Activated CD8-positive, alpha-beta T cell treated with anti-CD3 and anti-CD28 coated beads, Interleukin-2, amount 10 ng/mL, durations not matched to agents 7 days and 5 days (primary cell): ENCODE measurements at regions of chr10 and their contacts with region 1.

Region 1: DNA sequence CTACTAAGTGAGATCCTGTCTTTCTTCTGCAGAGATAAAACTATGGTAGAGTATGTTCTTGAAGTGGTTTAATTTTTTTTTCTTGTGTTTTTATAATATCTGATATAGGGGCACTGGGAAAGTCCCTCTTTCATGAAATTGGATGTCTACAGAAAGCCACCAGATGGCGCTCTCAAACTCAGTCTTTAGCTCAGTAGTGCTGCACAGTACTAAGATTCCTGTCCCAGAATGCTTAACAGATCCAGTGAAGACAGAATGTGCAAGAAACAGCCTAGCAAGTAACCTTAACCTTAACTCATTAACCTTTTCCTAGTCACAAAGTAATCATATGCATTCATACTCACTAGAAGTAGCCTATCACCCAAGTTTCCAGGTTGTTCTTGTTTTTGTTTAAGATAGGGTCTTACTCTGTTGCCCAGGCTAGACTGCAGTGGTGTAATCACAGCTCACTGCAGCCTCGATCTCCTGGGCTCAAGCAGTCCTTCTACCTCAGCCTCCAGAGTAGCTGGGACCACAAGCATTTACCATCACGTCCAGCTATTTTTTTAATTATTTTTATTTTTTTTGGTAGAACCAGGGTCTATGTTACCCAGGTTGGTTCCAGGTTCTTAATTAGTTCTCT is 56.7 kb downstream of the IDE start:
- DNase-seq: peak; percentile 82
- ATAC-seq: peak; percentile 97
- H3K4me3 Mint-ChIP-seq: no peak overlapping the region
- H3K27ac Mint-ChIP-seq: no peak overlapping the region
- H3K4me1 Mint-ChIP-seq: peaks cover 6% of the 10 kb centered on the region
- H3K27me3 Mint-ChIP-seq: no peaks in the 10 kb centered on the region

Region 2: GRCh38 chr10:92527716-92528115 is 10.6 kb after region 1 on chr10:
- CTCF ChIA-PET with region 1: interaction called, 17 read pairs
- POLR2A ChIA-PET with region 1: interaction called, 3 read pairs
- DNase-seq: no peak
- ATAC-seq: no peak
- H3K4me3 Mint-ChIP-seq: no peak overlapping the region
- H3K27ac Mint-ChIP-seq: no peak overlapping the region
- H3K4me1 Mint-ChIP-seq: no peaks in the 10 kb centered on the region
- H3K27me3 Mint-ChIP-seq: no peaks in the 10 kb centered on the region

Region 3: GRCh38 chr10:92573798-92574547 is 56.8 kb after region 1 on chr10 and contains the start of gene IDE:
- CTCF ChIA-PET with region 1: interaction called, 109 read pairs
- POLR2A ChIA-PET with region 1: no interaction called
- DNase-seq: peak; percentile 87
- ATAC-seq: peak; percentile 82
- H3K4me3 Mint-ChIP-seq: peak within 1 kb of the TSS; percentile 80
- H3K27ac Mint-ChIP-seq: peak within 1 kb of the TSS; percentile 84
- H3K4me1 Mint-ChIP-seq: peaks cover 23% of the 10 kb centered on the region
- H3K27me3 Mint-ChIP-seq: peaks cover 2% of the 10 kb centered on the region
- total RNA-seq, gene IDE: 12.5 to 13.4 TPM

Region 4: GRCh38 chr10:92867235-92867634 is 350.1 kb after region 1 on chr10:
- CTCF ChIA-PET with region 1: no interaction called
- POLR2A ChIA-PET with region 1: no interaction called
- DNase-seq: no peak
- ATAC-seq: no peak
- H3K4me3 Mint-ChIP-seq: no peak overlapping the region
- H3K27ac Mint-ChIP-seq: no peak overlapping the region
- H3K4me1 Mint-ChIP-seq: no peaks in the 10 kb centered on the region
- H3K27me3 Mint-ChIP-seq: no peaks in the 10 kb centered on the region